AG04449 (cell line): ENCODE measurements at regions of chr1 and their contacts with region 1.

Region 1: GRCh38 chr1:21919520-21919919 is 17.6 kb downstream of the HSPG2 start:
- DNase-seq: no peak
- H3K4me3 ChIP-seq: no peak overlapping the region
- CTCF ChIP-seq: no peak

Region 2: DNA sequence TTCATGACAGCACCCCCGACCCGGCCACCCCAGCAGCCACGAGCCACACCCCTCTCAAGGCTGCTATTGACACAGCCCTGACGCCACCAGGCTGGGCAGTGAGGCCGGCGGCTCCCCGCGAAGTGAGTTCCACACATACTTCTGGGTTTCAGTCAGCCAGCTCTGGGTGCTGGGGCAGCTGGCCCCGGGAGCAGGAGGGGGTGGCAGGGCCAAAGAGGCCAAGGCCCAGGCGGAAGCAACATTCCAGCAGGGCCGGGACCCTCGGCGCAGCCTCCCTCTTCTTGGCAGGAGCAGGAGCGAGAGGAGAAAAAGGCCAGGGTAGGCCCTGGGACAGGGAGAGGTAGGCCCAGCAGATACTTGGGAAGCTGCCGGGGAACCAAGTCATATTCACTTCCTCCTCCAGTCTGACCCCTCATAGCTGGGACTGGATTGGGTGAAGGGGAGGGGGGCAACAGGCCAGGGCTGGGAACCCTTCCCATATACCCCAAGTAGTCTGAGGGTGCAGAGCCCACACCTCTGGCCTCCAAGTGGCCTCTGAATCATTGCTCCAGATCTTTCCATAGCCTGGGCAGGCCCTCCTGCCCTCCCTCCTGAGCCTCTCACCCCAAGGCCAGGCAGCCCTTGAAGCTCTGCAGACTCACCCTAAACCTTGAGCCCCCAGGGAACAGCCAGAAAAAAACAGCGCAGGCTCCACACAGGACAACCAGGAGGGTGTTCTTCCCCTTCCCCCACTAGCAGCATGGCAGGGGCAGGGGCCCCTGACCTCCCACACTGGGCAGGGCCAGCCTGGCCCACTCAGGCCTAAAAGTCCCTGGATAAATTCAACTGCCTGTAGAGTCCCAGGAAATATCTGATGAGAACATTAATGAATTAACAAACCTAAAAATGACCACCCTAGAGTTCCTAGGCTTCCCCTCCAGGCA is 11.9 kb after region 1 on chr1:
- CTCF ChIA-PET with region 1: interaction called, 14 read pairs
- POLR2A ChIA-PET with region 1: interaction called, 12 read pairs
- DNase-seq: peak; percentile 67
- H3K4me3 ChIP-seq: peak overlapping the region; percentile 25
- CTCF ChIP-seq: no peak